CD8-positive, alpha-beta T cell (primary cell): ENCODE measurements at regions of chr5 and their contacts with region 1.

Region 1: GRCh38 chr5:72319976-72320752 is at the starts of genes MRPS27 and PTCD2:
- DNase-seq: peak; percentile 88 to 99 (median 92)
- ATAC-seq: peak; percentile 99
- H3K4me3 ChIP-seq: peak within 1 kb of the TSS; percentile 73 to 95
- H3K4me3 Mint-ChIP-seq: peak within 1 kb of the TSS; percentile 97
- H3K27ac ChIP-seq: peak within 1 kb of the TSS; percentile 57 to 73
- H3K27ac Mint-ChIP-seq: peak within 1 kb of the TSS; percentile 96
- H3K4me1 ChIP-seq: peaks cover 10% of the 10 kb centered on the region
- H3K4me1 Mint-ChIP-seq: peaks cover 39% of the 10 kb centered on the region
- H3K27me3 ChIP-seq: no peaks in the 10 kb centered on the region
- H3K27me3 Mint-ChIP-seq: no peaks in the 10 kb centered on the region
- CTCF ChIP-seq: no peak
- total RNA-seq, gene MRPS27: 24.1 to 27.3 TPM
- total RNA-seq, gene PTCD2: 3.7 TPM

Region 2: DNA sequence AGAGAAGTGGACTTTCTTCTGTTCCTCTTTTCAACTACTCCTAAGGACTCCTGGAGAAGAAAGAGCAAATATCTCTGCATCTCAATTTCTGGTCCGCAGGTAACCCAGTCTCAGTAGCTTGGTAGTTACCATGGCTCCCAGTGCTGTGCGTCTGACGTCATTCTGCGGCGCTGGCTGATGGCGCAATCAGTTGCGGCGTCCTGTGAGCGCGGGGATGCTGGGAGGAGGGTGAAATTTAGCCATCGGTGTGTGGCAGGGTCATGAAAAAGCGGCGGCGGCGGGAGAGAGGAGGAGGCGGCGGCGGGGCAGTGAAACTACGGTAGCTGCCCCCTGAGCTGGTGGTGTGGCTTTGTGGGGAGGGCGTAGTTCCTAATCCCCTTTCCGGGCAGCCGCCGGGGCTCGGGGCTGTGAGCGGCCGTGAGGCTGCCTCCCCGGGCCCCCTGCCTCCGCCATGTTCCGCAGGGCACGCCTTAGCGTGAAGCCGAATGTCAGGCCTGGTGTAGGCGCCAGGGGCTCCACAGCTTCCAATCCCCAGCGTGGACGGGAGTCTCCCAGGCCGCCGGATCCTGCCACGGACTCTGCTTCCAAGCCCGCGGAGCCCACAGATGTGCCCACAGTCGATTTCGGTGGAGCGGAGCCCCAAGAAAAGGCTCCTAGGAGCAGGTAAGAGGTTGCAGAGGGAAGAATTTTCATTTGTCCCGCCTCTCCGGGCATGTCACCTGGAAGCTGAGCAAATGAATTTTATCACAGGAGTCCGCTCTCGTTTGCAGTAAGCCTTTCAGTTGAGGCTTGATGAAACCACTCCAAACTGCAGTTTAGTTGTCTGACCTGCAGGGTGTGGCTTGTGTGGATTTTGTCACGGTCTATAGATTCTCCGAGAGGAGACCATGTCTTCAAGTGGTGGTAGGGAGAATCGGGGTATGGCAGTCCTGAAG is 864.5 kb before region 1 on chr5 and contains the start of gene BDP1:
- CTCF ChIA-PET with region 1: no interaction called
- POLR2A ChIA-PET with region 1: no interaction called
- intact Hi-C with region 1: loop called in 1 of 2 experiments (anchors 2 kb)
- DNase-seq: peak; percentile 93 to 99 (median 97)
- ATAC-seq: peak; percentile 87
- H3K4me3 ChIP-seq: peak within 1 kb of the TSS; percentile 81 to 84
- H3K4me3 Mint-ChIP-seq: peak within 1 kb of the TSS; percentile 100
- H3K27ac ChIP-seq: peak within 1 kb of the TSS; percentile 90 to 92
- H3K27ac Mint-ChIP-seq: peak within 1 kb of the TSS; percentile 100
- H3K4me1 ChIP-seq: peaks cover 19% of the 10 kb centered on the region
- H3K4me1 Mint-ChIP-seq: peaks cover 29% of the 10 kb centered on the region
- H3K27me3 ChIP-seq: peaks cover 0 to 10% of the 10 kb centered on the region in 2 experiments
- H3K27me3 Mint-ChIP-seq: peaks cover 2% of the 10 kb centered on the region
- CTCF ChIP-seq: peak; percentile 48
- total RNA-seq, gene BDP1: 29.6 to 33.2 TPM

Region 3: GRCh38 chr5:71586941-71587765 is 733.0 kb before region 1 on chr5 and contains the start of gene MCCC2:
- CTCF ChIA-PET with region 1: no interaction called
- POLR2A ChIA-PET with region 1: no interaction called
- intact Hi-C with region 1: loop called in 1 of 2 experiments (anchors 5 kb)
- DNase-seq: peak; percentile 93 to 97 (median 96)
- ATAC-seq: peak; percentile 97
- H3K4me3 ChIP-seq: peak within 1 kb of the TSS; percentile 82 to 88
- H3K4me3 Mint-ChIP-seq: peak within 1 kb of the TSS; percentile 96
- H3K27ac ChIP-seq: peak within 1 kb of the TSS; percentile 72 to 95
- H3K27ac Mint-ChIP-seq: peak within 1 kb of the TSS; percentile 98
- H3K4me1 ChIP-seq: peaks cover 32% of the 10 kb centered on the region
- H3K4me1 Mint-ChIP-seq: peaks cover 45% of the 10 kb centered on the region
- H3K27me3 ChIP-seq: no peaks in the 10 kb centered on the region
- H3K27me3 Mint-ChIP-seq: no peaks in the 10 kb centered on the region
- CTCF ChIP-seq: no peak
- total RNA-seq, gene MCCC2: 16.0 to 18.2 TPM

Region 4: GRCh38 chr5:72847989-72848473 is 527.9 kb after region 1 on chr5:
- CTCF ChIA-PET with region 1: no interaction called
- POLR2A ChIA-PET with region 1: no interaction called
- intact Hi-C with region 1: loop called in 1 of 2 experiments (anchors 1 kb)
- DNase-seq: peak; percentile 59 to 91 (median 82)
- ATAC-seq: peak; percentile 81
- H3K4me3 ChIP-seq: peak overlapping the region; percentile 84 to 89
- H3K4me3 Mint-ChIP-seq: peak overlapping the region; percentile 99
- H3K27ac ChIP-seq: peak overlapping the region; percentile 79 to 81
- H3K27ac Mint-ChIP-seq: peak overlapping the region; percentile 98
- H3K4me1 ChIP-seq: peaks cover 29% of the 10 kb centered on the region
- H3K4me1 Mint-ChIP-seq: peaks cover 61% of the 10 kb centered on the region
- H3K27me3 ChIP-seq: no peaks in the 10 kb centered on the region
- H3K27me3 Mint-ChIP-seq: no peaks in the 10 kb centered on the region
- CTCF ChIP-seq: no peak

Region 5: GRCh38 chr5:72955768-72956323 is 635.7 kb after region 1 on chr5 and contains the start of gene FCHO2:
- CTCF ChIA-PET with region 1: no interaction called
- POLR2A ChIA-PET with region 1: no interaction called
- intact Hi-C with region 1: loop called in 1 of 2 experiments (anchors 5 kb)
- DNase-seq: peak; percentile 88 to 98 (median 96)
- ATAC-seq: peak; percentile 90
- H3K4me3 ChIP-seq: peak within 1 kb of the TSS; percentile 61 to 95
- H3K4me3 Mint-ChIP-seq: peak within 1 kb of the TSS; percentile 95
- H3K27ac ChIP-seq: no peak within 1 kb of the TSS
- H3K27ac Mint-ChIP-seq: peak within 1 kb of the TSS; percentile 88
- H3K4me1 ChIP-seq: peaks cover 12% of the 10 kb centered on the region
- H3K4me1 Mint-ChIP-seq: peaks cover 15% of the 10 kb centered on the region
- H3K27me3 ChIP-seq: peaks cover 6 to 9% of the 10 kb centered on the region in 2 experiments
- H3K27me3 Mint-ChIP-seq: peaks cover 41% of the 10 kb centered on the region
- CTCF ChIP-seq: peak; percentile 65
- total RNA-seq, gene FCHO2: 2.4 to 2.9 TPM